CD4-positive, alpha-beta T cell (primary cell): ENCODE measurements at regions of chr9 and their contacts with region 1.

Region 1: DNA sequence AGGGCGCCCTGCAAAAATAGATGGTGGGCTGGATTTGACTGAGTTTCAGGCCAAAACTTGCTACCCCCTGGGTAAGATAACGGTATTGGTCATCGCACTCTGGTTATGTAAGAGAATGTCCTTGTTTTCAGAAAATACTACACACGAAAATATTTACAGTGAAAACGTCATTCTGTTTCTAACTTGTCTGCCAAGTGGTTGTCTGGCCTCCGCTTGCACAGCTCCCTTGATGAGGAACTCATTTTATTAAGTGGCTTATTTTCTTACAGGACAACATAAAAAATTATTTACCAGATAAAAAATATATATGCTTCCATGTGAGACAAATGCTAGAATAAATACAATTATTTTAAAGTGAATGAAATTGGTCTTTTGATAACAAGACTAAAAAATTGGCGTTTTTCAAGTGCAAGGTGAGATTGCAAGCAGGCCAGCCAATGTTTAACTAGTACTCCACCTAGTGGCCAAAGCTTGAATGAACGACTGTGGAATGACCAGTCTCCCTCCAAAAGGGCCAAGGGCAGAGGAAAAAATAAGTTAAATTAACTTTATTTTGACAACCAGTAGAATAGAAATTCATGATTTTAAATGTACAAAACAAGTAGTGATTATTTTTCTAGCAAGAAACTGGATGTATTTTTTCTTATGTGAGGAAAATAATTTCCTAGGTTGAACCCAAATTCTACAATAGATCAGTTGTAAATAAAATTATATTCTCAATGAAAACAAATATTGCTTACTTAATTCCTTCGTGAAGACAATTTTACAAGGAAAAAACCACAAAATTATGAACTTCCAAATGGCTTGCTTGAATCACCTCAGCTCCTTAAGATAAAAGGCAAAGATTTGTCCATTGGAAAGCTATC is 93.2 kb downstream of the ZFAND5 start:
- DNase-seq: peak in 12 of 14 experiments; percentile 7 to 71 (median 27)
- ATAC-seq: no peak
- H3K4me3 ChIP-seq: no peak overlapping the region
- H3K4me3 Mint-ChIP-seq: no peak overlapping the region
- H3K27ac ChIP-seq: no peak overlapping the region
- H3K27ac Mint-ChIP-seq: no peak overlapping the region
- H3K4me1 ChIP-seq: no peaks in the 10 kb centered on the region
- H3K4me1 Mint-ChIP-seq: no peaks in the 10 kb centered on the region
- H3K27me3 ChIP-seq: no peaks in the 10 kb centered on the region
- H3K27me3 Mint-ChIP-seq: no peaks in the 10 kb centered on the region
- CTCF ChIP-seq: peak; percentile 88

Region 2: GRCh38 chr9:71285191-71285656 is 986.6 kb before region 1 on chr9:
- CTCF ChIA-PET with region 1: no interaction called
- POLR2A ChIA-PET with region 1: no interaction called
- intact Hi-C with region 1: loop called (anchors 5 kb)
- DNase-seq: peak in 7 of 14 experiments; percentile 6 to 56 (median 36)
- ATAC-seq: peak; percentile 51
- H3K4me3 ChIP-seq: no peak overlapping the region
- H3K4me3 Mint-ChIP-seq: no peak overlapping the region
- H3K27ac ChIP-seq: no peak overlapping the region
- H3K27ac Mint-ChIP-seq: no peak overlapping the region
- H3K4me1 ChIP-seq: no peaks in the 10 kb centered on the region
- H3K4me1 Mint-ChIP-seq: no peaks in the 10 kb centered on the region
- H3K27me3 ChIP-seq: no peaks in the 10 kb centered on the region
- H3K27me3 Mint-ChIP-seq: no peaks in the 10 kb centered on the region
- CTCF ChIP-seq: peak; percentile 76

Region 3: DNA sequence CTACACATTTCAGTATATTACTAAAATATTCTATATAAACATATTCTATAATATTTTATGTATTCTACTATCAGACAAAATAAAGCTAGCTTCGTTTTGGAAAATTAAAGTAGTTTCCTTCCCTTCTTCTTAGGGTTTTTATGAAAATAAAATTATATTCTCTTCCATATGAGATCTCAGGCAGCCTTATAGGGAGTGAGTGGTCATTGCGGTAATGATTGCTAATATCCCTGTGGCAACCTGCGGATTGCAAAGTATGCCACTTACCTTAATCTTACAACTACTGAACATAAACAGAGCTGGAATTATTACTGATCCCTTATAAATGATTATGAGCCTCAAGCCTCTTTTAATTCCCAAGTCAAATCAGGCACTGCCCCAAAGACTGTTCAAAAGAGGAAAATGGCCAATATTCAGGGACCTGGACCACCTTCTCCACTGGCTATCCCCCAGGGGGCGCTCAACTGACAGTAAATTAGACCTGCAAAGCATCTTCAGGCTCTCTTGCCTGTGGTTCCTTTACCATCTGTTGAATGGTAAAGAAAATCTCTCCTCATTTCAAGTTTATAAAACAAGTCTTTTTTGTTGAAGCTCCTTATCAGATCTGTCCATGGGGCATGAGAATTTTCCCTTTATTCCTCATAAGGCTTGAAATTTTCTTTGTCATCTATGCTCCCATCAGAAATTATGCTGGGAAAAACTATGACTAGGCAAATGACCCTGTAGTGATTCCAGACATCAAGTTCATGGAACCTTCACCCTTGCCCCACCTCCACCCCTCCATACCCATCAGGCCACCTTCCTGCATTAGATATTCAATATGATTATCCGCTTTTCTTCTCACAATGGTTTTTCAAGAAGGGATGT is 667.4 kb before region 1 on chr9:
- CTCF ChIA-PET with region 1: no interaction called
- POLR2A ChIA-PET with region 1: no interaction called
- intact Hi-C with region 1: loop called (anchors 1 to 5 kb)
- DNase-seq: peak; percentile 60 to 91 (median 77)
- ATAC-seq: peak; percentile 75
- H3K4me3 ChIP-seq: no peak overlapping the region
- H3K4me3 Mint-ChIP-seq: no peak overlapping the region
- H3K27ac ChIP-seq: no peak overlapping the region
- H3K27ac Mint-ChIP-seq: no peak overlapping the region
- H3K4me1 ChIP-seq: no peaks in the 10 kb centered on the region
- H3K4me1 Mint-ChIP-seq: no peaks in the 10 kb centered on the region
- H3K27me3 ChIP-seq: no peaks in the 10 kb centered on the region
- H3K27me3 Mint-ChIP-seq: no peaks in the 10 kb centered on the region
- CTCF ChIP-seq: peak; percentile 94

Region 4: GRCh38 chr9:71806901-71807307 is 464.9 kb before region 1 on chr9:
- CTCF ChIA-PET with region 1: no interaction called
- POLR2A ChIA-PET with region 1: no interaction called
- intact Hi-C with region 1: loop called in 1 of 2 experiments (anchors 2 kb)
- DNase-seq: peak; percentile 31 to 81 (median 46)
- ATAC-seq: peak; percentile 90
- H3K4me3 ChIP-seq: no peak overlapping the region
- H3K4me3 Mint-ChIP-seq: no peak overlapping the region
- H3K27ac ChIP-seq: no peak overlapping the region
- H3K27ac Mint-ChIP-seq: no peak overlapping the region
- H3K4me1 ChIP-seq: peaks cover 10% of the 10 kb centered on the region
- H3K4me1 Mint-ChIP-seq: peaks cover 14% of the 10 kb centered on the region
- H3K27me3 ChIP-seq: no peaks in the 10 kb centered on the region
- H3K27me3 Mint-ChIP-seq: no peaks in the 10 kb centered on the region
- CTCF ChIP-seq: peak; percentile 90

Region 5: GRCh38 chr9:72251589-72251988 is 20.3 kb before region 1 on chr9:
- CTCF ChIA-PET with region 1: no interaction called
- POLR2A ChIA-PET with region 1: no interaction called
- intact Hi-C with region 1: no loop called
- DNase-seq: no peak
- ATAC-seq: no peak
- H3K4me3 ChIP-seq: no peak overlapping the region
- H3K4me3 Mint-ChIP-seq: no peak overlapping the region
- H3K27ac ChIP-seq: no peak overlapping the region
- H3K27ac Mint-ChIP-seq: no peak overlapping the region
- H3K4me1 ChIP-seq: no peaks in the 10 kb centered on the region
- H3K4me1 Mint-ChIP-seq: no peaks in the 10 kb centered on the region
- H3K27me3 ChIP-seq: peaks cover 4 to 5% of the 10 kb centered on the region in 2 experiments
- H3K27me3 Mint-ChIP-seq: peaks cover 48% of the 10 kb centered on the region
- CTCF ChIP-seq: no peak

Region 6: GRCh38 chr9:72827950-72828731 is 556.3 kb after region 1 on chr9:
- CTCF ChIA-PET with region 1: no interaction called
- POLR2A ChIA-PET with region 1: no interaction called
- intact Hi-C with region 1: loop called in 1 of 2 experiments (anchors 10 kb)
- DNase-seq: no peak
- ATAC-seq: no peak
- H3K4me3 ChIP-seq: no peak overlapping the region
- H3K4me3 Mint-ChIP-seq: no peak overlapping the region
- H3K27ac ChIP-seq: no peak overlapping the region
- H3K27ac Mint-ChIP-seq: no peak overlapping the region
- H3K4me1 ChIP-seq: no peaks in the 10 kb centered on the region
- H3K4me1 Mint-ChIP-seq: no peaks in the 10 kb centered on the region
- H3K27me3 ChIP-seq: no peaks in the 10 kb centered on the region
- H3K27me3 Mint-ChIP-seq: peaks cover 4% of the 10 kb centered on the region
- CTCF ChIP-seq: no peak